HCT116 (cell line): ENCODE measurements at regions of chr6 and their contacts with region 1.

Region 1: DNA sequence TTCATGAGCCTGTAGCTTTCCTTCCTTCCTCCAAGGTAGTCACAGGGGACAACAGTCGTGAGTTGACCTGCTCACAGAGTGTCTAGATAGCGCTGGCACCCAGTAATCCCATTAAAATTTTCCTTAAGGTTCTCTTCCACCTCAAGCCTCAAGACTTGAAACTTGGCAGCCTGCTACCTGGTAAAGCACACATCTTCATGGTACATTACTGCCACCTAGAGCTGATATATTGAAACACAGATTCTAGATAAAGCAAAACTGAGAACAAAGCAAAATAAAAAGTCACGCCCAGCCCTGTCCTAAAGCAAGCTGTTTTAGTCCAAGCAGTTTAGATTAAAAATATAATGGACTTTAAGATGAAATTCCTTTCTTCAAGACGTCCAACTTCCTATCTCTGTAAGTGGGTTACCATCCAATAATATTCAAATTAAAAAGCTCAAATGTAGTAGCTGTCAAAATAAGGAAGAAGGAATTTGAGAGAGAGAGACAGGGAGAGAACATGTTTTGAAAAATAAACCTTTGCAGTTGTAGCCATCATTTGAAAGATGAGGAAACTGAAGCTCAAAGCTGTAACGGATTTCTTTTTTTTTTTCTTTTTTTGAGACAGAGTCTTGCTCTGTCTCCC is 50.7 kb upstream of the CD83 start:
- DNase-seq: peak; percentile 68
- ATAC-seq: peak; percentile 88
- H3K4me3 ChIP-seq: no peak overlapping the region
- H3K27ac ChIP-seq: no peak overlapping the region
- H3K4me1 ChIP-seq: peaks cover 0 to 4% of the 10 kb centered on the region in 2 experiments; a peak in 1 of 4 replicates
- H3K27me3 ChIP-seq: no peaks in the 10 kb centered on the region
- CTCF ChIP-seq: peak; percentile 50 to 90 (median 67)
- POLR2A ChIP-seq: no peak
- RAD21 ChIP-seq: peak; percentile 93

Region 2: DNA sequence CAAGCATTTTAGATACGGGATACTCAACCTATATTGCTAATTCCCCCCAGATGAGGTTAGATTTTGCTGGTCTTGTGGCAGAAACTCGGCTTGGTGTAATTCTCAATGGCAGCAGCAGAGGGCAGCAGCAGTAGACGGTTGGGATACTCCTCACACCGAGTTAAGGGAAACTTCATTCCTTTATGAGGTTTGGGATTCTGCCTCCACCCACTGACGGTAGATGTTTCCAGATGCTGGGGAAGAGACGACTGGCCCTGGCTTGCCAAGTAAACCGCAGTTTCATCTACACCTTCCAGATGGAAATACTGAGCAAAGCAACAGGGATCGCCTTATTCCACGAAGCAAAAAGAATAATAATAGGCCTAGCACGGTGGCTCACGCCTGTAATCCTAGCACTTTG is 730.3 kb before region 1 on chr6:
- CTCF ChIA-PET with region 1: interaction called, 3 read pairs
- POLR2A ChIA-PET with region 1: no interaction called
- RAD21 ChIA-PET with region 1: no interaction called
- intact Hi-C with region 1: loop called (anchors 5 kb)
- DNase-seq: peak; percentile 73
- ATAC-seq: peak; percentile 87
- H3K4me3 ChIP-seq: no peak overlapping the region
- H3K27ac ChIP-seq: no peak overlapping the region
- H3K4me1 ChIP-seq: peaks cover 0 to 9% of the 10 kb centered on the region in 2 experiments; a peak in 2 of 4 replicates
- H3K27me3 ChIP-seq: no peaks in the 10 kb centered on the region
- CTCF ChIP-seq: peak; percentile 75 to 93 (median 88)
- POLR2A ChIP-seq: no peak
- RAD21 ChIP-seq: peak; percentile 97

Region 3: DNA sequence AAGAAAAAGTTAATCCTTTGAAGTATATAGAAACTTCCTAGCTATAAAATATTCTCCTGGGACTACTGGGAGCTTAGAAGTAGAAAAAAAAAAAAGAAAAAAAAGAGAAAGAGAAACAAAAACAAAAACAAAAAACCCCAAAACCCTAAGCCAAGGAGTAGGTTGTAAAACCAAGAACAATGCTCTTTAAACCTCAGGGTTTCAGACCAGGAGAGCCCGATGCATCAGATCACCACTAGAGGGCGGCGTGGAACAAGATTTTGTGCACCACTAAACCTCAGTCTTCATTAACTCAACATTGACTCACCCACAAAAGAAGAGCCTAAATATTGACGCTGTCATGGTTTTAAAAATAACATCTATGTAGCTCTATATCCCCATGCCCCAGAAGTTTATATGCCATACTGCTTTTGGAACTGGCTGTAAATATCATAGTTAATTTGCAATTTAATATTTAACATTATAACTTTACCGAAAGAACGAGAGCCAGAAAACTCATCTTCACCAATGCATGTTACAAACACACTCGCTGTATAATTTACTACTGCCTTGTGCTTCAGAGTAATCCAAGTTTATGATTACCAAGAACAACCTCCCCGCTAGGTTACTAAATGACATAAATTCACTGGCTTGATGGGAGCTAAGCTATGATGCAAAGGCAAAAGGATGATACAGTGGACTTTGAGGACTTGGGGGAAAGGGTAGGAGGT is 271.7 kb before region 1 on chr6:
- CTCF ChIA-PET with region 1: interaction called, 9 read pairs
- POLR2A ChIA-PET with region 1: no interaction called
- RAD21 ChIA-PET with region 1: no interaction called
- intact Hi-C with region 1: loop called (anchors 2 kb)
- DNase-seq: peak; percentile 46
- ATAC-seq: peak; percentile 94
- H3K4me3 ChIP-seq: no peak overlapping the region
- H3K27ac ChIP-seq: no peak overlapping the region
- H3K4me1 ChIP-seq: no peaks in the 10 kb centered on the region
- H3K27me3 ChIP-seq: no peaks in the 10 kb centered on the region
- CTCF ChIP-seq: peak; percentile 65 to 95 (median 88)
- POLR2A ChIP-seq: no peak
- RAD21 ChIP-seq: peak; percentile 81

Region 4: GRCh38 chr6:13914351-13914750 is 152.5 kb before region 1 on chr6:
- CTCF ChIA-PET with region 1: interaction called, 67 read pairs
- POLR2A ChIA-PET with region 1: no interaction called
- RAD21 ChIA-PET with region 1: interaction called, 3 to 15 read pairs
- intact Hi-C with region 1: loop called (anchors 1 kb)
- DNase-seq: no peak
- ATAC-seq: no peak
- H3K4me3 ChIP-seq: no peak overlapping the region
- H3K27ac ChIP-seq: no peak overlapping the region
- H3K4me1 ChIP-seq: peaks cover 5 to 23% of the 10 kb centered on the region in 2 experiments; a peak in 3 of 4 replicates
- H3K27me3 ChIP-seq: no peaks in the 10 kb centered on the region
- CTCF ChIP-seq: no peak
- POLR2A ChIP-seq: no peak
- RAD21 ChIP-seq: no peak

Region 5: GRCh38 chr6:14046476-14047068 is 20.3 kb before region 1 on chr6:
- CTCF ChIA-PET with region 1: interaction called, 13 read pairs
- POLR2A ChIA-PET with region 1: no interaction called
- RAD21 ChIA-PET with region 1: no interaction called
- intact Hi-C with region 1: no loop called
- DNase-seq: peak; percentile 51
- ATAC-seq: peak; percentile 96
- H3K4me3 ChIP-seq: no peak overlapping the region
- H3K27ac ChIP-seq: no peak overlapping the region
- H3K4me1 ChIP-seq: peaks cover 0 to 6% of the 10 kb centered on the region in 2 experiments; a peak in 2 of 4 replicates
- H3K27me3 ChIP-seq: no peaks in the 10 kb centered on the region
- CTCF ChIP-seq: peak; percentile 64 to 76 (median 68); a peak in 5 of 6 replicates
- POLR2A ChIP-seq: no peak
- RAD21 ChIP-seq: peak; percentile 78

Region 6: GRCh38 chr6:14108571-14109410 is 41.9 kb after region 1 on chr6:
- CTCF ChIA-PET with region 1: no interaction called
- POLR2A ChIA-PET with region 1: no interaction called
- RAD21 ChIA-PET with region 1: no interaction called
- intact Hi-C with region 1: no loop called
- DNase-seq: no peak
- ATAC-seq: no peak
- H3K4me3 ChIP-seq: no peak overlapping the region
- H3K27ac ChIP-seq: no peak overlapping the region
- H3K4me1 ChIP-seq: no peaks in the 10 kb centered on the region
- H3K27me3 ChIP-seq: no peaks in the 10 kb centered on the region
- CTCF ChIP-seq: no peak
- POLR2A ChIP-seq: no peak
- RAD21 ChIP-seq: no peak